ENCODE measurements at regions of chr6 and their contacts with region 1.

Region 1: GRCh38 chr6:45421709-45422502 is 44.2 kb upstream of the SUPT3H start:
- DNase-seq: peak; percentile 54
- CTCF ChIP-seq: peak; percentile 28

Region 2: GRCh38 chr6:44655412-44656342 is 766.2 kb before region 1 on chr6:
- in situ Hi-C with region 1: loop called (anchors 25 kb)
- DNase-seq: peak; percentile 82
- CTCF ChIP-seq: peak; percentile 84

Region 3: DNA sequence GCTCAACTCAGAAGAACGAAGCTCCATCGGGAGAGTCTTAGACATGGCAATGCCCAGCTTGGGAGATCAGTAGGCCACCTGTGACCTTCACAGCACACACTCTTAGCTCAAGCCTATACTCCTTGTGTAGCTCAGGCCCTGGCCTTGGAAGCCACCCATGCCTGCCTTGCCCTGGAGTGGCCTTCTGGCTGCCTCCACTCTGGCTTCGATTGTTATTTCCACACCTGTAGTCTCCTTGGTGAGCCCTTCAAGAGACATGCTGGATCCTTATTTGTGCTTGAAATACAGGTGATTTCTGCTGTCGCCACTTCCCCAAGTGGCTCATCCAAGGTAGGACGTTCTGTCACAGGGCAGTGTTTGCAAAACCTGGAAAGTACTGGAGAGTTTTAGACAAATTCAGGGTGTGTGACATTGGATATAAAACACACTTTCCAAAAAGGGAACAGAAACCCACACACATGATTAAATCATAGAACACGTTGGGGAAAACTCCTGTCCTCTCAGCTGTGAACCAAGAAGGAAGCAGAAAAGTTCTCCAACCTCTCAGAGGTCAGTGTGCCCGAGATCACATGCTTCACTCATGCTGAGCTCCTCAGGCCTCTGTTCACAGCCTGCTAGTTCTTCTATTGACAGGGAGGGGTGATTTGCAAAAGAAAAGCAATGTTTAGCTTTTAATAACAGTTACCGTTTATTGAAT is 642.6 kb before region 1 on chr6:
- in situ Hi-C with region 1: no loop called
- DNase-seq: peak; percentile 40
- CTCF ChIP-seq: no peak